Activated naive CD4-positive, alpha-beta T cell treated with anti-CD3 and anti-CD28 coated beads for 36 hours (primary cell): ENCODE measurements at regions of chr14 and their contacts with region 1.

Region 1: DNA sequence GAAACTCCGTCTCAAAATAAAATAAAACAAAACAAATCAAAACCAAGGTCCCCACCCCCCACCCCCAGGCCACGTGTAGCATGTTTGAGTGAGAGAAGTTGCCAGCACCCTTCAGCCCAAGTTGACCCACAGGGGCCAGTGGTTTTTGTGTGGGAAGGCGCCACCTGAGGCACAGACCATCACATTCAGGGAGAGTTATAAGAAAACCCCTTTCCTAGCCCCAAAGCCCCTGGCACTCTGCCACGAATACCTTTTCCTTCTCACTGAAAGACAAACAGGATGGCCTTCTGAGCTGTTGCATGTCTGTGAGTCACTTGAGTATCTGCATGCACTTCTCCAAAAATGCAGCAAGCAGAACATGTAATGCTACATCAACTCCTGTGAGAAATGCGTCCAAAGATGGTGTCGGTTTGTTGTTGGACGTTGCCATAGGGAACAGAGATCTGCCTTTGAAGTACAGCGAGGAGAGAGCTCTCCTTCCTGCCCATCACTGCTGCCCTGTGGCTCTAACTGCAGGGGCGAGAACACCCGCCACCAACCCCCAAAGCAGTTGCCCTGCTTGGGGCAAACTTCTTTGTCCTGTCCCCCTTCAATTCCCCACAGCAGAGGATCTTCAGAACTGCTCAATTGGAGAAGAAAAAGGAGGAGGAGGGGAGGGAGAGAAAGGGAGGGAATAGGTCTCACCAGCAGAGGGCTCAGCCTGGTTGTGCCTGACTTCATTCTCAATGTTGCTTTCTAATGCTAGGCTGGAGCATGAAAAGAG is 2.7 kb upstream of the TRAF3 start:
- DNase-seq: peak; percentile 81
- H3K4me3 Mint-ChIP-seq: peak overlapping the region; percentile 41
- H3K27ac Mint-ChIP-seq: peak overlapping the region; percentile 86
- H3K4me1 Mint-ChIP-seq: peaks cover 31% of the 10 kb centered on the region
- H3K27me3 Mint-ChIP-seq: no peaks in the 10 kb centered on the region

Region 2: DNA sequence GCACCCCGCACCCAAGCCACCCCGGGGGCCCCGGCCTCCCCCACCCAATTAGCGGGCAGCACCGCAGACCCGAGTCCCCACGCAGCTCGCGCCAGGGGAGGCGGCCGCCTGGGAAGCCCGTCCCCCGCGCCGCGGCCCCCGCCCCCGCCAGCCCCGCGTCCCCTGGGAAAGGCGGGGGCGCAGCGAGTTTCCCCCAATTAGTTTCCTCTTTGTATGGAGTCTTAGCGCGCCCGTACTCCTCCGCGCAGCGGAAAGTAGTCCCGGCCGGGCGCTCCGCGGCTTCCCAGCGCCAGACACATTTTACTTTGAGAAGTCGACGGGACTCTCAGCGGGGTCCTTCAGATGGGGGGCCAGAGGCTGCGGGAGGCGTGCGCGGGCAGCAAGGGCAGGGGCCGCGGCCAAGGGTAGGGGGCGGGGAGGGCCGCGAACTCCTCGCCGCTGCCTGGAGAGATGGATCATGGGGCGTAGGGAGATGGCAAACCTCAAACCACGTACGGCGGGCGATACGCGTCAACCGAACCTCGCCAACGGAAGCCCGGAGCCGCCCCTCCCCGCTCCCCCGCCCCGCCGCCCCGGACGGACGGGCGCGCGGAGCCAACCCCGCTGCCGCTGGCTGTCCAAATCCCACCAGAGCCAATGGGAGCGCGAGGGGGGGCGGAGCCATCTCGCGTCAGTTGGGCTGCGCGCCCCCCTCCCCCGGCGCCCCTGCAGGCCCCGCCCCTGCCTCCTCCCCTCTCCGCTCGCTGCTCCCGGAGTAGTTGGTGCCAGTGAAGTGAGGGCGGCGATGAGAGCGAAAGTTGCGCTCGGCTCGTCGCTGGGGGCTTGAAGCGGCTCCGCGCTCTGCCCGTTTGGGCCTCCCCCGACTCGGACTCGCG is 182.4 kb before region 1 on chr14 and contains the start of gene RCOR1:
- CTCF ChIA-PET with region 1: interaction called, 7 read pairs
- intact Hi-C with region 1: loop called (anchors 1 kb)
- DNase-seq: peak; percentile 98
- H3K4me3 Mint-ChIP-seq: peak within 1 kb of the TSS; percentile 85
- H3K27ac Mint-ChIP-seq: peak within 1 kb of the TSS; percentile 91
- H3K4me1 Mint-ChIP-seq: peaks cover 31% of the 10 kb centered on the region
- H3K27me3 Mint-ChIP-seq: no peaks in the 10 kb centered on the region
- total RNA-seq, gene RCOR1: 11.9 to 12.2 TPM

Region 3: DNA sequence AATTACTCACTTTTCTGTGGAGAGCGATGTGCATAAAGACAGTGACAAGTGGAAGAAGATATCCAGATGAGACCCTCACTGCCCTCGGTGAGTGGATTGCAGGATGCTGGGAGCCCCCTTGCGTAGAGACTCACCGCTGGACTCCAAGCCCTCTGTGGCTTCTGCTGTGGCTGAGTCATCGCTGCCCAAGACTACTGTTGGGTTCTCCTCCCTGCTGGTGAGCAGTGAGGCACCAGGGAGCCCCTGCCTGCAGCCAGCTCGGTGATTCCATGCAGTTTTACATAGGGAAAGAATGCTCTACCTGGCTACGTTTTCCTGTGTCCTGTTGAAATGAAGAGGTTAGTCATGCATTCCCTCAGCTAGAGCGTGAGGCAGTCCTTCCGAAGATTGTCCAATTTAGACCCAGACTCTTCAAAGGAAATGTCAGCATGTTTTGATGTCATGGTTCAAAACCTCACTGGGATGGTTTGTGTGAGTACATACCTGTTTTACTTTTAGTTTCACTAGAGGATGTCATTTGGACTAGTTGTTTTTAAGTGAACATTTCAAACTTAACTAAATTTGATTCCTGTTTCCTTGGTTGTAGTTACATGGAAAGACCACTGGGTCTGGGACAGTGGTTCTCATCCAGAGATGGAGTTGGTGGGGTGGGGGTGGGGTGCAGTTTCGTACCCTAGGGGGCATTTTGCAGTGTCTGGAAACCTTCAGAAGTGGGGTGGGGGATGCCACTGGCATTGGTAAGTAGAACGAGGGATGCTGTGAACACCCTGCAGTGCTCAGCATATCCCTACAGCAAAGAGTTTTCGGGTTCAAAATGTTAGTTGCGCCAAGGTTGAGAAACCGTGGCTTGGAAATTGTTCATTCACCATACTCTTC is 31.0 kb after region 1 on chr14:
- CTCF ChIA-PET with region 1: interaction called, 5 read pairs
- intact Hi-C with region 1: loop called (anchors 1 kb)
- DNase-seq: peak; percentile 63
- H3K4me3 Mint-ChIP-seq: peak overlapping the region; percentile 54
- H3K27ac Mint-ChIP-seq: peak overlapping the region; percentile 99
- H3K4me1 Mint-ChIP-seq: peaks cover 80% of the 10 kb centered on the region
- H3K27me3 Mint-ChIP-seq: no peaks in the 10 kb centered on the region

Region 4: GRCh38 chr14:102882226-102882906 is 107.8 kb after region 1 on chr14:
- CTCF ChIA-PET with region 1: no interaction called
- intact Hi-C with region 1: loop called (anchors 5 kb)
- DNase-seq: no peak
- H3K4me3 Mint-ChIP-seq: no peak overlapping the region
- H3K27ac Mint-ChIP-seq: peak overlapping the region; percentile 80
- H3K4me1 Mint-ChIP-seq: peaks cover 20% of the 10 kb centered on the region
- H3K27me3 Mint-ChIP-seq: no peaks in the 10 kb centered on the region

Region 5: GRCh38 chr14:102917469-102918211 is 143.1 kb after region 1 on chr14:
- CTCF ChIA-PET with region 1: no interaction called
- intact Hi-C with region 1: loop called (anchors 1 kb)
- DNase-seq: peak; percentile 80
- H3K4me3 Mint-ChIP-seq: no peak overlapping the region
- H3K27ac Mint-ChIP-seq: no peak overlapping the region
- H3K4me1 Mint-ChIP-seq: no peaks in the 10 kb centered on the region
- H3K27me3 Mint-ChIP-seq: no peaks in the 10 kb centered on the region